IMR-90 (cell line): ENCODE measurements at regions of chr4 and their contacts with region 1.

Region 1: DNA sequence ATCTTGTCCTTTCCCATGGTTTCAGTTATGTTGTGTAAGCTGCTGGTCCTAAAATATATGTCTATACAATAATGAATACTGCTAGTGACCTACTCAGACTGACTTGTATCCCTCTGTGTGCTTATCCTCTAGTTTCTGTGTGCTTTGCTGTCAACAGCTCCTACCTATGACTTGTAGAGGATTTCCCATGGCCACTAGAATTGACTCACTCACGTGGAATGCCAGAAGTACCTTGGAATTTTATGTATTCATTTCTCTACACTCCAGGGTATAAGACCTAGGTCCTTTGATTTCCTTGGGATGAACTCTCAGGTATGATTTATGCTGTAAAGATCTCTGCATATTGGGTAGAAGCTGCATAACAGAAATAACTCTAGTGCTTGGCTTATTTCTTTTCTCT is 279.9 kb upstream of the SLIT2 start:
- DNase-seq: peak; percentile 45
- ATAC-seq: peak; percentile 21; the same call in 1 of the 2 replicates
- H3K4me3 ChIP-seq: no peak overlapping the region
- H3K27ac ChIP-seq: no peak overlapping the region
- H3K4me1 ChIP-seq: no peaks in the 10 kb centered on the region; the same call in 1 of the 2 replicates
- H3K27me3 ChIP-seq: no peaks in the 10 kb centered on the region
- CTCF ChIP-seq: no peak
- POLR2A ChIP-seq: no peak
- RAD21 ChIP-seq: no peak

Region 2: DNA sequence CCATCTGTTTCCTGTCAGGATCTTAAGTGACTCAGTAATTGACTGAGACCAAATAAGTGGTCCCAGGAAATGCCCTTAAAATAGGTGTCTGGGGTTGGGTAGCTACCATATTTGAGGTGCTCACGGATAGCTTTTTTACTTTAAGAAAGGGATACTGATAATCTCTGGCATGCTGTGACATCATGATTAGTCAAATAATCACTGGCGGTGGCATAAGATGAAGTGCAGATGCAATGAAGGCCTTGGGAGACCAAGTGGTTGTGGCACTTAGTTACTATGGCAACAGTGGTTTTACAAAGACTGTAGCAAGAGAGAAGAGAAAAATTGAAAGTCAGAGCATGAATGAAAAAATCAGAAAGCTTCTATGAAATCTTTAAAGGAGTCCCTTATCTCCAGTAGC is 165.3 kb after region 1 on chr4:
- CTCF ChIA-PET with region 1: no interaction called
- POLR2A ChIA-PET with region 1: interaction called, 13 read pairs
- dilution Hi-C with region 1: no loop called
- in situ Hi-C with region 1: no loop called
- intact Hi-C with region 1: no loop called
- DNase-seq: peak; percentile 68
- ATAC-seq: no peak; the same call in 1 of the 2 replicates
- H3K4me3 ChIP-seq: no peak overlapping the region
- H3K27ac ChIP-seq: no peak overlapping the region
- H3K4me1 ChIP-seq: no peaks in the 10 kb centered on the region
- H3K27me3 ChIP-seq: no peaks in the 10 kb centered on the region
- CTCF ChIP-seq: no peak
- POLR2A ChIP-seq: no peak
- RAD21 ChIP-seq: no peak